A549 (cell line): ENCODE measurements at regions of chr10 and their contacts with region 1.

Region 1: GRCh38 chr10:72126184-72126871 is 38.0 kb upstream of the SPOCK2 start:
- DNase-seq: peak; percentile 58 to 73
- ATAC-seq: peak; percentile 62 to 84; a peak in 5 of 6 replicates
- H3K4me3 ChIP-seq: no peak overlapping the region
- H3K27ac ChIP-seq: peak overlapping the region; percentile 51 to 65
- H3K4me1 ChIP-seq: peaks cover 39% of the 10 kb centered on the region; the same call in 2 of the 3 replicates
- CTCF ChIP-seq: peak; percentile 85
- EP300 ChIP-seq: no peak
- POLR2A ChIP-seq: no peak
- RAD21 ChIP-seq: peak; percentile 85 to 88

Region 2: GRCh38 chr10:72061491-72061890 is 64.8 kb before region 1 on chr10:
- CTCF ChIA-PET with region 1: interaction called, 11 read pairs
- POLR2A ChIA-PET with region 1: no interaction called
- DNase-seq: no peak
- ATAC-seq: peak; percentile 62 to 76; a peak in 4 of 6 replicates
- H3K4me3 ChIP-seq: no peak overlapping the region
- H3K27ac ChIP-seq: peak overlapping the region in 1 of 2 experiments; percentile 57; a peak in 3 of 6 replicates
- H3K4me1 ChIP-seq: peaks cover 10% of the 10 kb centered on the region; the same call in 2 of the 3 replicates
- CTCF ChIP-seq: peak; percentile 30; the same call in 1 of the 3 replicates
- EP300 ChIP-seq: no peak
- POLR2A ChIP-seq: no peak
- RAD21 ChIP-seq: peak; percentile 32 to 58; a peak in 4 of 5 replicates

Region 3: DNA sequence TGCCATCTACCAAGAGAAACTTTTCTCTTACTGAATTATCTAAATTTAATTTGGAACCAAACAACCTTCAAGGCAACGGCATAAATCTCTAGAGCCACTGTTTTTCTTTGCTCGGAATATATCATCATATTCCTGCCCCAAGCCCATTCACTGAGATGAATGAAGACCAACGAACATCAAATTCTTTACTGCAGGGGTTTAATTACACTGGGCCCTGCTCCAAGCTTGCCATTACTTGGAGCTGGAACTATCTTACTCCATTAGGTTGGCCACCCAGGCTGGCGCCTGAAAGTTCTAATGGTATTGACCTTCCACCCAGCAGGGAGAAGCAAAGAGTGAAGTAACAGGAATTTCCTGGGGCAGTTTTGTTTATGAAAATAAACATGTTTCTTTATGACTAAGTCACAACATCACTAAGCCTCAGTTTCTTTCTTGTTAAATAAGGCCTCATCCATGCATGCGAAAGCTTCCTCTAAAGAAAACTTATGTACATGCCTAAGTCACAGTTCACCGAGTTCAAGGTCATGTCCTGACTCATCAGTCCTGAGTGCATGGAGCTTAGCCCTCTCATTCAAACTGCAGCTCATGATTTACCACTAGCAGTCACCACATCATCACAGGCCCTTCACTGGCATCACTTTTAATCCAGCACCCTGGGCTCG is 47.4 kb after region 1 on chr10:
- CTCF ChIA-PET with region 1: interaction called, 12 read pairs
- POLR2A ChIA-PET with region 1: no interaction called
- DNase-seq: peak in 1 of 2 experiments; percentile 89
- ATAC-seq: peak; percentile 53 to 68; a peak in 5 of 6 replicates
- H3K4me3 ChIP-seq: no peak overlapping the region
- H3K27ac ChIP-seq: peak overlapping the region; percentile 77 to 85
- H3K4me1 ChIP-seq: peaks cover 76% of the 10 kb centered on the region
- CTCF ChIP-seq: no peak
- EP300 ChIP-seq: peak; percentile 86 to 95; a peak in 3 of 5 replicates
- POLR2A ChIP-seq: no peak
- RAD21 ChIP-seq: peak in 1 of 2 experiments; percentile 24; a peak in 3 of 5 replicates

Region 4: GRCh38 chr10:72215652-72216549 is 89.6 kb after region 1 on chr10 and contains the starts of genes ANAPC16 and ASCC1:
- CTCF ChIA-PET with region 1: interaction called, 91 read pairs
- POLR2A ChIA-PET with region 1: interaction called, 14 read pairs
- DNase-seq: peak; percentile 86 to 95
- ATAC-seq: peak; percentile 93 to 97
- H3K4me3 ChIP-seq: peak within 1 kb of the TSS; percentile 61
- H3K27ac ChIP-seq: peak within 1 kb of the TSS; percentile 89 to 95
- H3K4me1 ChIP-seq: peaks cover 54% of the 10 kb centered on the region
- CTCF ChIP-seq: no peak
- EP300 ChIP-seq: no peak
- POLR2A ChIP-seq: peak; percentile 87
- RAD21 ChIP-seq: 0 out of 5 replicates have a peak, but pooled peaks of 1 of the 2 experiments have one; percentile 19
- polyA plus RNA-seq, gene ANAPC16: 136 and 165 TPM in 2 replicates
- polyA plus RNA-seq, gene ASCC1: 82.3 and 83.7 TPM in 2 replicates

Region 5: GRCh38 chr10:72229261-72230251 is 103.2 kb after region 1 on chr10:
- CTCF ChIA-PET with region 1: interaction called, 91 read pairs
- POLR2A ChIA-PET with region 1: no interaction called
- DNase-seq: peak in 1 of 2 experiments; percentile 32
- ATAC-seq: no peak
- H3K4me3 ChIP-seq: no peak overlapping the region
- H3K27ac ChIP-seq: peak overlapping the region; percentile 46 to 72; a peak in 4 of 6 replicates
- H3K4me1 ChIP-seq: peaks cover 37% of the 10 kb centered on the region
- CTCF ChIP-seq: no peak
- EP300 ChIP-seq: no peak
- POLR2A ChIP-seq: no peak
- RAD21 ChIP-seq: no peak

Region 6: DNA sequence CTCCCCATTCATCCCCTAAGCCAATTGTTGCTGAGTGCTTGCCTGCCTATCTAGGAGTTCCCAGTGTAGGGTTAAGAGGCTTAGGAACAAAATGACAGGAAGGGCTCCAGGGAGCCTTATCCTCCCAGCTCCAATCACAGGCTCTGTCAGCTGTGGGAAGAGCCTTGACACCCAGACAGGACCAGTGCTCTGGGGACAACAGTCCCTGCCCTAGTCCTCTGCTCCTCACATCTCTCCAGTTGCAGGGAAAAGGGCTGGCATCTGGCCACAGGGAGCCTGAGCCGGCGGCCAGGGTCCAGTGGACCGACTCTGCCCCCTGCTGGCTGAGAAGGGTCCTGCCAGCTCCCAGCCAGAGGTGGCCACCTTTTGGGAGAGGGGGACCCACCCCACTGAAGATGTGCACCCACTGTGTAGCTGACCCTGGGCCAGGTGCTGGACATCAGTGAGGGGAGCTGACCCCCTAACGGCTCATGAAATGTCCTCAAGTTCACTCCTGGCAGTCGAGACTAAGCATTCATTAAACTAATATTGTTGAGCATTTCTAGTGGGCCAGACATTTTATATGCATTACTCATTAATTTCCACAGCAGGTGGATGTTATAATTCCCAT is 210.8 kb after region 1 on chr10:
- CTCF ChIA-PET with region 1: interaction called, 44 read pairs
- POLR2A ChIA-PET with region 1: no interaction called
- DNase-seq: peak; percentile 49 to 63
- ATAC-seq: peak; percentile 56 to 75; a peak in 5 of 6 replicates
- H3K4me3 ChIP-seq: no peak overlapping the region
- H3K27ac ChIP-seq: peak overlapping the region; percentile 78 to 80
- H3K4me1 ChIP-seq: peaks cover 48% of the 10 kb centered on the region
- CTCF ChIP-seq: peak; percentile 96
- EP300 ChIP-seq: no peak
- POLR2A ChIP-seq: no peak
- RAD21 ChIP-seq: peak; percentile 94 to 95